ENCODE measurements at regions of chr9 and their contacts with region 1.

Region 1: GRCh38 chr9:13427587-13427986 is 148.1 kb upstream of the MPDZ start:
- DNase-seq: no peak
- H3K4me3 ChIP-seq: no peak overlapping the region
- H3K27ac ChIP-seq: peak overlapping the region in 3 of 4 donors; percentile 9 to 37 (median 32)
- H3K4me1 ChIP-seq: peaks cover 13 to 32% (median 27%) of the 10 kb centered on the region in 4 donors
- H3K27me3 ChIP-seq: no peaks in the 10 kb centered on the region
- CTCF ChIP-seq: peak; percentile 69 to 79 (median 74)
- EP300 ChIP-seq: no peak
- POLR2A ChIP-seq: no peak

Region 2: DNA sequence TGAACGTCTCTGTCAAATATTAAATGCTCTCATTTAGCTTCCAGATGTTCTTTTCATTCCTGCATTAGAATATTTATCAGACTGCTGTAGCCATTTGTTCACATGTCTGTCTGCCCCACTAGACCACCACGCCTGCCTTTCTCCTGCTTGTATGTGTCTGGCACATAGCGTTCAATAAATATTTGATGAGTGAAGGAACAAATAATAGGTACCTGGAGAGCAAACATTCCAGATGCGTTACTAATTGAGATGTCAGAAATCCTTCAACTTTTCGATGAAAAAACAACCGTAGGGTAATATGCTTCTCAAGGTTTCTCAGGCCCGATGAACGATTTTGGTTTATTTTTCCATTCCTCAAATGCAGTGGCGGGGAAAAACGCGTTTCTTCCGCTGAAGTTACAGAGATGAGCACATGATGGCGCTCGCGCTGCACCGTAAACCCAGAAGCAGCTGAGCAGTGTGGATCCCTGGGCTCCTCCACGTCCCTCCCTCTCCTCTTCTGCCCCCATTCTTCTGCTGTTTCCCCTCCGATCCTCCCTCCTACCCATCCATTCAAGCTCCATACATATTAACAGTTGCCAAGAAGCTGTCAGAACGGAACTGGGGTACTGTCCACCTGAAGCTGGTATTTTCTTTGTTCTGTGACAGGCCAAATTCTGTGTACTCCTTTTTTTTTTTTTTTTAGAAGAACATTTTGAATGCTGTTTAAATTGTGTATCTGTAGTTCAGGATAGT is 393.5 kb before region 1 on chr9:
- intact Hi-C with region 1: loop called (anchors 10 kb)
- DNase-seq: no peak
- H3K4me3 ChIP-seq: peak overlapping the region; percentile 31 to 50 (median 38)
- H3K27ac ChIP-seq: peak overlapping the region; percentile 13 to 51 (median 32)
- H3K4me1 ChIP-seq: peaks cover 0 to 21% (median 14%) of the 10 kb centered on the region in 4 donors
- H3K27me3 ChIP-seq: no peaks in the 10 kb centered on the region
- CTCF ChIP-seq: peak; percentile 63 to 80 (median 78)
- EP300 ChIP-seq: no peak
- POLR2A ChIP-seq: no peak

Region 3: GRCh38 chr9:13351778-13352386 is 75.7 kb before region 1 on chr9:
- intact Hi-C with region 1: loop called (anchors 5 kb)
- DNase-seq: no peak
- H3K4me3 ChIP-seq: no peak overlapping the region
- H3K27ac ChIP-seq: no peak overlapping the region
- H3K4me1 ChIP-seq: no peaks in the 10 kb centered on the region
- H3K27me3 ChIP-seq: no peaks in the 10 kb centered on the region
- CTCF ChIP-seq: peak; percentile 57 to 71 (median 67)
- EP300 ChIP-seq: no peak
- POLR2A ChIP-seq: no peak

Region 4: DNA sequence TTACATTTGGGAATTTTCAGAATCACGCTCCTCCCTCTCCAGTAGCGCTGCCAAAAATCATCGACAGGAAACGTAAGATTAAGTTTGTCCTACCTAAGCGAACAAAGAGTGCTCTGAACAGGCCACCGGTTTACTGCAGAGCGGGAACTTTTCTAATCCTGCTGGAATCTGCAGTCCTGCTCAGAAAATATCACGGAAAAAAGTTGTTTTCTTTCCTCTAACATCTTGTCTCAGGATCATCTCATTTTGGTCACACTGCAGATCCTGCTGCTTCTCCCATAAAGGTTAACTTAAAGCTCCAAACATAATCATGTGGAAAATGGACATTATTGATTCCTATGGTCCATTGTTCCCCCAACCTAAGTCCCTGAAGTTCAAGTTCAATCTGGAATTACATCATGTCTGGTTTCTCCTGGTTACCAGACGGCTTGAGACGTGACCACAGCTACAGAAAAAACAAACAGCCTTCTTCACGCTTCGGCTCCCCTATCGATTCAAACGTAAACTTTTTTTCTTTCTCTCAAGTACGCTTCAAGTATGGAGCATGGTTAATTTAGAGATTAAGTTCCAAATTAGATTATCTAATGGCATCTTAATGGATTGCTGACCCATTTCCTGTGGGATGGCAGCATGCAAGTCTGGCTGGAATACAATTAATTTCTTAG is 668.8 kb after region 1 on chr9:
- intact Hi-C with region 1: loop called (anchors 10 kb)
- DNase-seq: no peak
- H3K4me3 ChIP-seq: peak overlapping the region; percentile 26 to 40 (median 39)
- H3K27ac ChIP-seq: peak overlapping the region; percentile 58 to 79 (median 74)
- H3K4me1 ChIP-seq: peaks cover 30 to 47% (median 44%) of the 10 kb centered on the region in 4 donors
- H3K27me3 ChIP-seq: no peaks in the 10 kb centered on the region
- CTCF ChIP-seq: no peak
- EP300 ChIP-seq: no peak
- POLR2A ChIP-seq: no peak

Region 5: DNA sequence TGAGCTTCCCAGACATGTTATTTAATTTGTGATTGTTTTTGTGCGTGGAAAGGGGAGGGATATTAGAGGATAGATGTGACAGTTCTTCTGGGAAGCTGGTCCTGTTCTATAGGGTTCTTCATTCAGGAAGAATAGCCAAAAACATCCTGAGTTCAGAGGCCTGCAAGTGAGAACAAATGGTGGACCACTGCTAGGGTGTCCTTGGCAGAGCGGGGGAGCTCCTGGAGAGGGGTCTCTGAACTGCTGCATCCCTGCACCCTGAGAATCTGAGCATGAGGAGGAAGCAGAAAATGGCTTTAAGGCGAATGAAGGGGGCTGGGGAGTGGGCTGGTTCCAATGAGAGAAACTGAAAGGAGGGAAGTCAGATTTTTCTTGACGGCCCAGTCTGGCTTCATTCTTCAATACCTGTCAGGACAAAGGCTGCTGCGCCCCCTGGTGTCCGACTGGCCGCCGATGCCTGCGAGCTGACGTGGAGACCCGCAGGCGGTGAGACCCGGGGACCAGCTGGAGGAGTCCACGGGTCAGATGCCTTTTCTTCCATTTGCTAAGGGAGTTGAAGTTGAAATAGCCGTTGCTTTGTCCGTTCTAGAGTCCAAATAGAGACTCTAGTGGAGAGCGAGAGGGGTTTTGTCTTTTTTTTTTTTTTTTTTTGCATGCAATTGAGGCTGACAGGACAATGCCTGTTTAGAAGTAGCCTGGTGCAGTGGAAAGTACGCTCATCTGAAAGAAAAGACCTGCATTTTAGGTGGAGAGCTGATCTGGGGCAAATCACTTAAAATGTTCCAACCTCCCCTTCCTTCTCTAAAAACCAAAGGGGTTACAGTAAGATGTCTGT is 925.9 kb after region 1 on chr9:
- intact Hi-C with region 1: loop called (anchors 2 kb)
- DNase-seq: peak; percentile 98
- H3K4me3 ChIP-seq: peak overlapping the region; percentile 15 to 44 (median 33)
- H3K27ac ChIP-seq: peak overlapping the region; percentile 50 to 67 (median 62)
- H3K4me1 ChIP-seq: peaks cover 43 to 62% (median 52%) of the 10 kb centered on the region in 4 donors
- H3K27me3 ChIP-seq: peaks cover 0 to 19% (median 10%) of the 10 kb centered on the region in 4 donors
- CTCF ChIP-seq: peak; percentile 88 to 96 (median 90)
- EP300 ChIP-seq: no peak
- POLR2A ChIP-seq: no peak

Region 6: GRCh38 chr9:14433351-14434157 is 1006.0 kb after region 1 on chr9:
- intact Hi-C with region 1: loop called (anchors 5 kb)
- DNase-seq: no peak
- H3K4me3 ChIP-seq: peak overlapping the region in 2 of 4 donors; percentile 7 to 29
- H3K27ac ChIP-seq: no peak overlapping the region
- H3K4me1 ChIP-seq: peaks cover 10 to 18% (median 14%) of the 10 kb centered on the region in 4 donors
- H3K27me3 ChIP-seq: no peaks in the 10 kb centered on the region
- CTCF ChIP-seq: peak; percentile 32 to 44 (median 34)
- EP300 ChIP-seq: no peak
- POLR2A ChIP-seq: no peak